B cell (primary cell): ENCODE measurements at regions of chr9 and their contacts with region 1.

Region 1: DNA sequence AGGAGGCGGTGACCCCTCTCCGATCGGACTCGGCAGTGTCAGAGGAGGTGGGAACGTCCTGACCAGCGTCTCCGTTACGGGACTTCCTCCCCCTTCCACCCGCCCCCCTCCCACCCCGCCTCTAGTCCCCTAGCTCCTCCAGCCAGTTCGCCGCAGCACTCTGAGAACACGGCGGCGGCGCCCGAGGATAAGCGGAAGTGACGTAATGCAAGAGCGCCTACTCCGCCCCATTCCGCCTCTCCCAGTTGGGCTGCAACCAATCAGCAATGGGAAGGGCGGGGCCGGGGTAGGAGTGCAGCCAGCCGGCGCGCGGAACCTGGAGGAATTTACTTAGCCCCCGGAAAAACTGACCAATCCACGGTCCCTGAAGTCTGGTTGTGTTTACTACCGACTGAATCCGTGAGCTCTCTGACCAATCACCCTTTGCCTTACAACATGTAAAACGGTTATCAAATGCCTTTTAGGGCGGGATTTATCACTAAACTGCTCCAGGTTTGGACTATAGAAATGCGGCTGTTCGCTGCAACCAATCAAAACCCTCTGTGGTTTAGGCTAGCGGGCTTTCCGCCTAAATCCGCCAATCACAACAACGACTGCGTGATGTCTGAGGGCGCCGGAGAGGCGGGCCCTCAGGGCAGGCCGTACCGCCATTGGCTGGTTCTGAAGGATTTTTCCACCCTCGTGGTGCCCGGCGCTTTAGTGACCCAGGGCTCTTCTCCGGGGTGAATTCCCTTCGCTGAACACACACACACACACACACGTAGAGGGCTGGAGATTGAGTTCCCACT is at the start of gene ZBTB5:
- DNase-seq: peak; percentile 100
- ATAC-seq: peak; percentile 77
- H3K4me3 ChIP-seq: peak within 1 kb of the TSS; percentile 90 to 99 (median 95)
- H3K4me3 Mint-ChIP-seq: peak within 1 kb of the TSS; percentile 95
- H3K27ac ChIP-seq: peak within 1 kb of the TSS; percentile 93 to 98
- H3K27ac Mint-ChIP-seq: peak within 1 kb of the TSS; percentile 98
- H3K4me1 ChIP-seq: peaks cover 23 to 27% of the 10 kb centered on the region in 2 donors
- H3K4me1 Mint-ChIP-seq: peaks cover 30% of the 10 kb centered on the region
- H3K27me3 ChIP-seq: no peaks in the 10 kb centered on the region
- H3K27me3 Mint-ChIP-seq: no peaks in the 10 kb centered on the region
- CTCF ChIP-seq: no peak
- total RNA-seq, gene ZBTB5: 25.1 and 27.6 TPM in 2 replicates

Region 2: DNA sequence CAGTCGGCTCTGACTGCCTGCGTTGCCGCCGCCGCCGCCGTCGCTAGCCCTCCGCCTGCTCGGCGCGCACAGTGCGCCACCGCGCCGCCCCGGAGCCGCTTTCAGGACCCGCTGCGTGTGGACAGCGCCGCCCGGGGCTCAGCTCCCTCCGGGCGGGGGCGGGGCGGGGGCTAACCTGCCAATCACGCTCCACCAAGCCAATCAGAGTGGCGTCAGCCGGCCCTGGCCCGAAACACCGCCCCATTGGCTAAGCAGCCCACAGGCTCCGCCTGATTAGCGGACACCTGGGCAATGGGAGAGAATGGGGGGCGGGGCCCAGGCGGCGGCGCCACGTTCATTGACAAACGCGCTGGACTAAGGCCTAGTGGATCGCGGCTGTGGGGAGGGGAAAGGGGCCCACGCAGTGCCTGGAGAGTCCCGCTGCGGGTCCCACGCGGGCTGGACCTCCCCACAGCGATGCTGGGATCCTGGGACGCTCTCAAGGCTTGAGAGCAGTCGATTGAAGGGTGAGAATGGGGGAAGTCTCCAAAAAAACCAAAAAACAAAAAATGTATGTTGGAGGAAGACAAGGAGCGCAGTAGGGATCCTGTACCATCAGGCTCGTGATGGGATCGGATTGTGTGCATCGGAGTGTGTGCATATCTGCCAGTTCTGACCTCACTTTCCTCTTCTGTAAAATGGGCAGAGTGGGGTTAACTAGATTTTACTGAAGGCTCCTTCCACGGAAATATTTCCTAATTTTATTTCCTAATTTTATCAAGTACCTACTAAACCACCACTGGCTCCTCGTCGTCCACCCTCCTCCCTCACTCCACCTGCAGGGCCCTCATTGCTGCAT is 437.6 kb before region 1 on chr9:
- CTCF ChIA-PET with region 1: no interaction called
- POLR2A ChIA-PET with region 1: no interaction called
- intact Hi-C with region 1: loop called (anchors 5 kb)
- DNase-seq: peak; percentile 99
- ATAC-seq: peak; percentile 84
- H3K4me3 ChIP-seq: peak overlapping the region; percentile 5 to 95 (median 86)
- H3K4me3 Mint-ChIP-seq: peak overlapping the region; percentile 89
- H3K27ac ChIP-seq: peak overlapping the region; percentile 98 to 100
- H3K27ac Mint-ChIP-seq: peak overlapping the region; percentile 96
- H3K4me1 ChIP-seq: peaks cover 62 to 81% of the 10 kb centered on the region in 2 donors
- H3K4me1 Mint-ChIP-seq: peaks cover 78% of the 10 kb centered on the region
- H3K27me3 ChIP-seq: no peaks in the 10 kb centered on the region
- H3K27me3 Mint-ChIP-seq: no peaks in the 10 kb centered on the region
- CTCF ChIP-seq: no peak

Region 3: GRCh38 chr9:37324261-37324683 is 141.2 kb before region 1 on chr9:
- CTCF ChIA-PET with region 1: no interaction called
- POLR2A ChIA-PET with region 1: no interaction called
- intact Hi-C with region 1: no loop called
- DNase-seq: peak; percentile 90
- ATAC-seq: peak; percentile 84
- H3K4me3 ChIP-seq: peak overlapping the region in 2 of 5 experiments; percentile 7 to 31
- H3K4me3 Mint-ChIP-seq: peak overlapping the region; percentile 76
- H3K27ac ChIP-seq: peak overlapping the region; percentile 97 to 98
- H3K27ac Mint-ChIP-seq: peak overlapping the region; percentile 100
- H3K4me1 ChIP-seq: peaks cover 43 to 78% of the 10 kb centered on the region in 2 donors
- H3K4me1 Mint-ChIP-seq: peaks cover 62% of the 10 kb centered on the region
- H3K27me3 ChIP-seq: no peaks in the 10 kb centered on the region
- H3K27me3 Mint-ChIP-seq: no peaks in the 10 kb centered on the region
- CTCF ChIP-seq: no peak

Region 4: DNA sequence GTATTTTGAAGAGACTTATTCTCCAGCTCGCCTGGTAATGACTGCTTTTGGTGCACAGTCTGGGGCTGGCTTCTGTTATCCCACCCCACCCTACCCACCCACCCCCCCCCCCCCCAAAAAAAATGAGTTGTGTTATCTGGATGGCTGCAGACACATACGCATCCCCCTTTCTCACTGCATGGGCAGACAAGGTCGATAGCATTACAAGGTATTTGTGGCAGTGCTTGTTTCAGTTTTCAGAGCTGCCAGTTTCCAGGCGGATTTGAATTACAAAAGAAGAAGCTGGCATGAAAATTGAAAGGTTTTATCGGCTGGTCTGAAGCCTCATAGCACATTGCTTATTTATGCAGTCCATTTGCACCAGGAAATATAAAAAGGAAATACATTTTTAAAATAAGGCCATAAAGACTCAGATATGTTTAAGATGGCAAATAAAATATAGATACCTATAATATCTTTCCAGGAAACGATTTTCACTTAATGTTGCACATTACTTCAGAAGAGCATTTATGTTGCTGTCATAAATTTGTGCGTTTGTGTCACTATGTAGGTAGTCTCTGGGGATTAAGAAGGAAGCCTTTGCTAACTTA is 128.0 kb before region 1 on chr9:
- CTCF ChIA-PET with region 1: no interaction called
- POLR2A ChIA-PET with region 1: interaction called, 14 read pairs
- intact Hi-C with region 1: no loop called
- DNase-seq: peak; percentile 49
- ATAC-seq: peak; percentile 50
- H3K4me3 ChIP-seq: peak overlapping the region in 3 of 5 experiments; percentile 10 to 42 (median 10)
- H3K4me3 Mint-ChIP-seq: peak overlapping the region; percentile 82
- H3K27ac ChIP-seq: peak overlapping the region; percentile 34 to 77
- H3K27ac Mint-ChIP-seq: peak overlapping the region; percentile 88
- H3K4me1 ChIP-seq: peaks cover 57 to 86% of the 10 kb centered on the region in 2 donors
- H3K4me1 Mint-ChIP-seq: peaks cover 53% of the 10 kb centered on the region
- H3K27me3 ChIP-seq: no peaks in the 10 kb centered on the region
- H3K27me3 Mint-ChIP-seq: no peaks in the 10 kb centered on the region
- CTCF ChIP-seq: no peak

Region 5: DNA sequence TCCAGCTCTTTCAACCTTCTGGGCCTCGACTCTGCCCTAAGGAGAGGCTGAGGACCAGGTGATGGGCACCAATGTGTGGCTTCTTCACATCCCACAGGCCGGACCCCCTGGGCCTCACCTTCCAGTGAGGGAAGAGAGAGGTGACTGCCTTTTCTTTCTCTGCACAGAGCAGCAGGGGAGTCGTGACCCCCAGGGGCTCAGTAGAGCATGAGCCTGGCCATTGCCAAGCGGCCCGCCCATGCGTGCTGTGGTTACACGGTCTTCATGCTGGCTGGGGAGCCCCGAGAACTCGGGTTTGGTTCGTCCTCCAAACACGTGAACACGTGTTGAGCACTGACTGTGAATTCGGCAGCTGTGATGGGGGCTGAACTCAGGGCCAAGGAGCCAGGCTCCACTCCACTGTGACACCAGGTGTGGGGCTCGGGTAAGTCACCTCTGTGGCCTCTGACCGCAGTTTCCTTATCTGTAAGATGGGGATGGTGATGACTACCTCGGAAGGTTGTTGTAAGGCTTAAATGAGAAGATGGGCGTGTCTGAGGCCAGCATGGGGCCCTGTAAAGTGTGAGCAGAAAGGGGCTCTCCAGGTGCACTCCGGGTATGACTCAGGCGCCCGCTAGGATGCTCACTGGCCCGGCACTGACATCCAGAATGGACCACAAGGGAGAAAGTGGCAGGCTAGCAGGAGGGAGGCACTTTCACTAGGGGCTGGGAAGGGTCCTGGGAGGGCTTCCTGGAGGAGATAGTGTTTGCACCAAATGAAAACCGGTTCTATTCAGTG is 56.3 kb before region 1 on chr9:
- CTCF ChIA-PET with region 1: interaction called, 3 read pairs
- POLR2A ChIA-PET with region 1: interaction called, 8 read pairs
- intact Hi-C with region 1: loop called (anchors 1 kb)
- DNase-seq: peak; percentile 99
- ATAC-seq: peak; percentile 82
- H3K4me3 ChIP-seq: no peak overlapping the region
- H3K4me3 Mint-ChIP-seq: peak overlapping the region; percentile 78
- H3K27ac ChIP-seq: peak overlapping the region; percentile 72 to 91
- H3K27ac Mint-ChIP-seq: peak overlapping the region; percentile 97
- H3K4me1 ChIP-seq: peaks cover 58 to 72% of the 10 kb centered on the region in 2 donors
- H3K4me1 Mint-ChIP-seq: peaks cover 78% of the 10 kb centered on the region
- H3K27me3 ChIP-seq: no peaks in the 10 kb centered on the region
- H3K27me3 Mint-ChIP-seq: no peaks in the 10 kb centered on the region
- CTCF ChIP-seq: peak; percentile 31

Region 6: GRCh38 chr9:37485389-37486219 is 20.2 kb after region 1 on chr9 and contains the start of gene POLR1E:
- CTCF ChIA-PET with region 1: interaction called, 12 read pairs
- POLR2A ChIA-PET with region 1: interaction called, 10 read pairs
- intact Hi-C with region 1: loop called (anchors 1 kb)
- DNase-seq: peak; percentile 96
- ATAC-seq: peak; percentile 99
- H3K4me3 ChIP-seq: peak within 1 kb of the TSS; percentile 27 to 93 (median 89)
- H3K4me3 Mint-ChIP-seq: peak within 1 kb of the TSS; percentile 94
- H3K27ac ChIP-seq: peak within 1 kb of the TSS; percentile 57 to 62
- H3K27ac Mint-ChIP-seq: peak within 1 kb of the TSS; percentile 95
- H3K4me1 ChIP-seq: peaks cover 24 to 26% of the 10 kb centered on the region in 2 donors
- H3K4me1 Mint-ChIP-seq: peaks cover 32% of the 10 kb centered on the region
- H3K27me3 ChIP-seq: peaks cover 0 to 4% (median 2%) of the 10 kb centered on the region in 4 experiments
- H3K27me3 Mint-ChIP-seq: peaks cover 6% of the 10 kb centered on the region
- CTCF ChIP-seq: no peak
- total RNA-seq, gene POLR1E: 30.3 and 31.0 TPM in 2 replicates

Region 7: GRCh38 chr9:37503736-37504135 is 38.3 kb after region 1 on chr9:
- CTCF ChIA-PET with region 1: no interaction called
- POLR2A ChIA-PET with region 1: no interaction called
- intact Hi-C with region 1: no loop called
- DNase-seq: no peak
- ATAC-seq: no peak
- H3K4me3 ChIP-seq: no peak overlapping the region
- H3K4me3 Mint-ChIP-seq: no peak overlapping the region
- H3K27ac ChIP-seq: no peak overlapping the region
- H3K27ac Mint-ChIP-seq: no peak overlapping the region
- H3K4me1 ChIP-seq: no peaks in the 10 kb centered on the region
- H3K4me1 Mint-ChIP-seq: peaks cover 3% of the 10 kb centered on the region
- H3K27me3 ChIP-seq: no peaks in the 10 kb centered on the region
- H3K27me3 Mint-ChIP-seq: no peaks in the 10 kb centered on the region
- CTCF ChIP-seq: no peak

Region 8: DNA sequence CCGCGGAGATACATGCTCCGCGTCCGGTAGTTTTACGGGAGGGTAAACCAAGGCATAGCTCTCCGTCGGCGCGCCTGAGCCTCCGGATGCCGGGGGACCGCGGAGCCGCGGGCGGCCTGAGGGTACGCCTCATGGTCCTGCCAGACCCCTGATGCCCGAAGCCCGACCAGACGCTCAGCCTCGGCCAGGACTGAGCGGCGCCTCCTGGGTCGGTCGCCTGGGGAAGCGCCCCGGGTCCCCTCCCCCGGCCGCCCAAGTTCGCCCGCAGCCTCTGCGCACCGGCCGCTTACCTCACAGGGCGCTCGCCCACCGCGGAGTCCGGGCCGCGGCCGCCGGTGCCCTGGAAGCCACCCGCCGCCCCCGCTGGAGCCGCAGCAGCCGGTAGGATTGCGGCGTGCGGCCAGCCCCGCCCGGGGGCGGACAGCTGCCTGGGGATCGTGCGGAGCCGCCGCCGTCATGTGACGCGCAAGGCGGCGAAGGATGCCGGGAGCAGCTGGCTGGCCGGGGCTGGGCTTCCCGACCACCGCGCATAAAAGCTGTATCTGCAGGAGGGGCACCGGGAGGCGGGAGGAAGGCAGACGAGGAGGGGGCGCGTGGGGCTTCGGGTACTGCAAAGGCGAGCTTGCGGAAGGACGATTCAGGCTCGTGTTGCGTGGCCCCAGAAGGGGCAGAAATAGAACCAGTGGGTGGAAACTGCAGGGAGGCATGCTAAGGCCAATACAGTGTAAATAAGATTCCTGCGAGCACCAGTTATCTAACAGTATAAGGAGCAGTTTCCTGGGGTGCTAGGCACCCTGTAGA is 110.7 kb after region 1 on chr9 and contains the start of gene FBXO10:
- CTCF ChIA-PET with region 1: no interaction called
- POLR2A ChIA-PET with region 1: no interaction called
- intact Hi-C with region 1: loop called (anchors 5 kb)
- DNase-seq: peak; percentile 75
- ATAC-seq: peak; percentile 73
- H3K4me3 ChIP-seq: peak within 1 kb of the TSS; percentile 64 to 95 (median 92)
- H3K4me3 Mint-ChIP-seq: peak within 1 kb of the TSS; percentile 98
- H3K27ac ChIP-seq: peak within 1 kb of the TSS; percentile 81 to 86
- H3K27ac Mint-ChIP-seq: peak within 1 kb of the TSS; percentile 96
- H3K4me1 ChIP-seq: peaks cover 17 to 27% of the 10 kb centered on the region in 2 donors
- H3K4me1 Mint-ChIP-seq: peaks cover 56% of the 10 kb centered on the region
- H3K27me3 ChIP-seq: no peaks in the 10 kb centered on the region
- H3K27me3 Mint-ChIP-seq: no peaks in the 10 kb centered on the region
- CTCF ChIP-seq: no peak
- total RNA-seq, gene FBXO10: 67.3 and 68.0 TPM in 2 replicates

Region 9: DNA sequence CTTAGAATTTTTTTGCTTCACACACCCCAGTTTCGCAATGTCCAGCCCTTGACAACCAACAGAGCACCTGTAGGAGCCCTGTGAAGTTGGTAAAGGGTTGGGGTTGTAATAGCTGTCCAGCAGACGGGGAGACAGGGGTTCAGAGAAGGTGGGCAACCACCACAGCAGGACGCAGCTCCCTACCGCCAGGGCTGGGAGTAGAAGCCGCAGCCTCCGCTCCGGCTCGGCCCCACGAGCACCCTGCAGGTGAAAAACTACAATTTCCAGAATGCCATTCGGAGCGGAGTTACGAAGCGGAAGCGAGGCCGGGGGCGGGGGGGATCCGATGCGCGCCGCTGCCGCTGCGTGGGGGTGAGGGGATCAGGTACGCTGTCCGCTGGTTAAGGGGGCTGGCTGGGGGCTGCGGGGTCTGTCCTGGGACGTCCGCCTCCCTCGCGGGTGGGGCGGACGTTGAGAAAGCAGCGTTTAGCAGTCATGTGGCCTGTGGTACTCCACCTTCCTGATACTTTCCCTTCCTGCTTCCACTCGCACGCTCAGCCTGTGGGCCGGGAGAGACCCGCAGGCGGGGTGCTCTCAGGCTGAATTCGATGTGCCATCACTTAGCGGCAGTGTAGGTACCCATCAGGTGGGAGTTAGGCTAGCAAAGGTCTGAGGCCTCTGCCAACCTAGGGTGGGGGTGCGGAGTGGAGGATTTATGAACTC is 288.2 kb after region 1 on chr9 and contains the start of gene TRMT10B:
- CTCF ChIA-PET with region 1: no interaction called
- POLR2A ChIA-PET with region 1: no interaction called
- intact Hi-C with region 1: loop called (anchors 1 kb)
- DNase-seq: peak; percentile 83
- ATAC-seq: peak; percentile 90
- H3K4me3 ChIP-seq: peak within 1 kb of the TSS; percentile 48 to 96 (median 84)
- H3K4me3 Mint-ChIP-seq: peak within 1 kb of the TSS; percentile 98
- H3K27ac ChIP-seq: peak within 1 kb of the TSS; percentile 80 to 81
- H3K27ac Mint-ChIP-seq: peak within 1 kb of the TSS; percentile 93
- H3K4me1 ChIP-seq: peaks cover 14 to 16% of the 10 kb centered on the region in 2 donors
- H3K4me1 Mint-ChIP-seq: peaks cover 23% of the 10 kb centered on the region
- H3K27me3 ChIP-seq: no peaks in the 10 kb centered on the region
- H3K27me3 Mint-ChIP-seq: no peaks in the 10 kb centered on the region
- CTCF ChIP-seq: no peak
- total RNA-seq, gene TRMT10B: 27.8 and 28.4 TPM in 2 replicates